ENCODE measurements at regions of chr11 and their contacts with region 1.

Region 1: GRCh38 chr11:122863704-122864326 is 18.7 kb upstream of the JHY start:
- DNase-seq: peak; percentile 51
- ATAC-seq: no peak
- H3K4me3 Mint-ChIP-seq: no peak overlapping the region
- H3K27ac Mint-ChIP-seq: no peak overlapping the region
- H3K4me1 Mint-ChIP-seq: no peaks in the 10 kb centered on the region
- H3K27me3 Mint-ChIP-seq: no peaks in the 10 kb centered on the region

Region 2: DNA sequence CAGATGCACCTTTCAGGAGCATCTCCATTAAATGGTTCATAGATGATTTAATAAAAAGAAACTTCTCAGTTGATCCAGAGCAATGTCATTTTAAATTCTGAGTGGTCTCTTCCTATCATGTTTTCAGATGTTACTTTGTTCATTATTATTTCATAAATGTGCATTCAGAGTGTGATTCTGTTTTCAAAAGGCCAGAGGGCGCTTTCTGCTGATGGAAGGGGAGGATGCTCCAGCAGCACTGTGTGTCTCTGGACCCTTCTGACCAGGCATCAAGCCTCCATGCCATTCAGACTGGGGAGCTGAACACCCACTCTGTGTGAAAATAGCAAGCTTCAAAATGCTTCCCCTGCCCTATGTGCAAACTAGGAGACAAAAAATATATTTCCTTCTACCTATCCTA is 49.4 kb before region 1 on chr11:
- CTCF ChIA-PET with region 1: interaction called, 337 read pairs
- POLR2A ChIA-PET with region 1: no interaction called
- DNase-seq: peak; percentile 30
- ATAC-seq: no peak
- H3K4me3 Mint-ChIP-seq: no peak overlapping the region
- H3K27ac Mint-ChIP-seq: no peak overlapping the region
- H3K4me1 Mint-ChIP-seq: peaks cover 41% of the 10 kb centered on the region
- H3K27me3 Mint-ChIP-seq: no peaks in the 10 kb centered on the region

Region 3: GRCh38 chr11:122882857-122883645 is 19.2 kb after region 1 on chr11:
- CTCF ChIA-PET with region 1: interaction called, 17 read pairs
- POLR2A ChIA-PET with region 1: no interaction called
- DNase-seq: peak; percentile 62
- ATAC-seq: peak; percentile 87
- H3K4me3 Mint-ChIP-seq: peak overlapping the region; percentile 73
- H3K27ac Mint-ChIP-seq: peak overlapping the region; percentile 84
- H3K4me1 Mint-ChIP-seq: peaks cover 18% of the 10 kb centered on the region
- H3K27me3 Mint-ChIP-seq: peaks cover 10% of the 10 kb centered on the region

Region 4: GRCh38 chr11:123054301-123055065 is 190.7 kb after region 1 on chr11:
- CTCF ChIA-PET with region 1: interaction called, 47 read pairs
- POLR2A ChIA-PET with region 1: no interaction called
- DNase-seq: peak; percentile 52
- ATAC-seq: peak; percentile 45
- H3K4me3 Mint-ChIP-seq: no peak overlapping the region
- H3K27ac Mint-ChIP-seq: peak overlapping the region; percentile 61
- H3K4me1 Mint-ChIP-seq: peaks cover 43% of the 10 kb centered on the region
- H3K27me3 Mint-ChIP-seq: no peaks in the 10 kb centered on the region